ENCODE measurements at regions of chr12 and their contacts with region 1.

Region 1: GRCh38 chr12:53757095-53757770 is 5.5 kb upstream of the CISTR start:
- DNase-seq: peak; percentile 55
- ATAC-seq: peak; percentile 89
- H3K4me3 ChIP-seq: no peak overlapping the region
- H3K27ac ChIP-seq: no peak overlapping the region
- H3K4me1 ChIP-seq: peaks cover 2% of the 10 kb centered on the region
- H3K27me3 ChIP-seq: peaks cover 68% of the 10 kb centered on the region
- CTCF ChIP-seq: peak; percentile 64
- POLR2A ChIP-seq: no peak
- RAD21 ChIP-seq: peak; percentile 47

Region 2: DNA sequence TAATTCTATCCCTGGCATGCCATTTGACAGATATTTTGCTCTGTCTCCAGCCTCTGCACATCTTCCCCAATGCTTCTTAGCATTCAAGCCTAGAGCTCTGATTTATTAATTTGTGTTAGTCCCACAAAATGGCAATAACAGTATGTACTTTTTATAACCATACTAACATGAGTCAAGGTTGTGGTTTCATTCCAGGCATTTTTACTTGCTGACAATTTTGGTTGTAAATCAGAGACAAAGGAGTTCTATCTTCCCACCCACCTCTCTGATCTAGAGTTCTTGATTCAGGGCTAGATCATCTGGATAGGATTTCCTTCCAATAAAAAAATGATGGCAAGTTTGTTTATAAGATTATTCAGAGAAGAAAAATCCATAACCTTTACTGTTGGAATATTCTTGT is 13.0 kb after region 1 on chr12:
- CTCF ChIA-PET with region 1: interaction called, 14 read pairs
- POLR2A ChIA-PET with region 1: no interaction called
- dilution Hi-C with region 1: no loop called
- in situ Hi-C with region 1: no loop called
- intact Hi-C with region 1: no loop called
- DNase-seq: peak; percentile 97
- ATAC-seq: peak; percentile 84
- H3K4me3 ChIP-seq: no peak overlapping the region
- H3K27ac ChIP-seq: no peak overlapping the region
- H3K4me1 ChIP-seq: peaks cover 13% of the 10 kb centered on the region
- H3K27me3 ChIP-seq: no peaks in the 10 kb centered on the region
- CTCF ChIP-seq: no peak
- POLR2A ChIP-seq: no peak
- RAD21 ChIP-seq: no peak

Region 3: DNA sequence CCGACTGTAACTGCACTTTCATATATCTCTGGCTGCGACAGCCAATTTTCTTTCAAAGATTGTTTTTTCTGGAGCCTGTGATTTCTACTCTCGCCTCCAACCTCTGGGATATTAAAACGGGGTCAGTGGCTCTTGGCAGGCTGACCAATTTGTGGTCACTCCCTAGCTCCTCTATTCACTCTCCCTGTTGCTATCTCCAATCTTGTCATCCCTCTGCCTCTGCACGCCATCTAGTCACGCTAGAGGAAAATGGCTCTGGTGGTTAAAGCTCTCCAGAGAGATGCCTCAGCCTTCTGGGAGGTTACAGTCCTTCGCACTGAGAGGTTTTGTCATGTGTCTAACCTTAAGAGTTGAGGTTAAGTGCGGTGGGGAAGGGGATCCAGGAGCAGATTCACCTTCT is 54.4 kb after region 1 on chr12:
- CTCF ChIA-PET with region 1: no interaction called
- POLR2A ChIA-PET with region 1: no interaction called
- dilution Hi-C with region 1: no loop called
- in situ Hi-C with region 1: no loop called
- intact Hi-C with region 1: no loop called
- DNase-seq: no peak
- ATAC-seq: no peak
- H3K4me3 ChIP-seq: no peak overlapping the region
- H3K27ac ChIP-seq: no peak overlapping the region
- H3K4me1 ChIP-seq: no peaks in the 10 kb centered on the region; the same call in 1 of the 2 replicates
- H3K27me3 ChIP-seq: peaks cover 60% of the 10 kb centered on the region
- CTCF ChIP-seq: no peak
- POLR2A ChIP-seq: no peak
- RAD21 ChIP-seq: no peak

Region 4: DNA sequence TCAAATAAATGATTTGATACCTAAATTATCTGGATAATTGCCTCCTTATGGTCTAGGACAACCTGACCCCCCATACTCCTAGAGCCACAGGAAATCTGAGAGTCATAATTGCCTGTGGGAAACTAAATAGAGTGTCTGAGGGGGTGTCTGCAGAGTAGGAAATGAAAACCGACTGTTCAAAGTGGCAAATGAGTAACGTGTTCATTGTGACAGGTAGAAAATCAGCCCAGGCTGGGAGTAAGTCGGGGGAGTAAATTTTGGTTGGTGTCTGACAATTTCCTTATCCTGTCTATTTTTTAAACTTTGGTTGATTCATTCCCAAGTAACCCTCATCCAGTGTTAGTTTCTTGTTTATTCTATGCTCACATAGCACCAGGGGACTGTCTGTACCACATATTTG is 129.8 kb after region 1 on chr12:
- CTCF ChIA-PET with region 1: no interaction called
- POLR2A ChIA-PET with region 1: no interaction called
- dilution Hi-C with region 1: no loop called
- in situ Hi-C with region 1: no loop called
- intact Hi-C with region 1: no loop called
- DNase-seq: no peak
- ATAC-seq: no peak
- H3K4me3 ChIP-seq: no peak overlapping the region
- H3K27ac ChIP-seq: no peak overlapping the region
- H3K4me1 ChIP-seq: no peaks in the 10 kb centered on the region
- H3K27me3 ChIP-seq: peaks cover 14% of the 10 kb centered on the region
- CTCF ChIP-seq: no peak
- POLR2A ChIP-seq: no peak
- RAD21 ChIP-seq: no peak

Region 5: DNA sequence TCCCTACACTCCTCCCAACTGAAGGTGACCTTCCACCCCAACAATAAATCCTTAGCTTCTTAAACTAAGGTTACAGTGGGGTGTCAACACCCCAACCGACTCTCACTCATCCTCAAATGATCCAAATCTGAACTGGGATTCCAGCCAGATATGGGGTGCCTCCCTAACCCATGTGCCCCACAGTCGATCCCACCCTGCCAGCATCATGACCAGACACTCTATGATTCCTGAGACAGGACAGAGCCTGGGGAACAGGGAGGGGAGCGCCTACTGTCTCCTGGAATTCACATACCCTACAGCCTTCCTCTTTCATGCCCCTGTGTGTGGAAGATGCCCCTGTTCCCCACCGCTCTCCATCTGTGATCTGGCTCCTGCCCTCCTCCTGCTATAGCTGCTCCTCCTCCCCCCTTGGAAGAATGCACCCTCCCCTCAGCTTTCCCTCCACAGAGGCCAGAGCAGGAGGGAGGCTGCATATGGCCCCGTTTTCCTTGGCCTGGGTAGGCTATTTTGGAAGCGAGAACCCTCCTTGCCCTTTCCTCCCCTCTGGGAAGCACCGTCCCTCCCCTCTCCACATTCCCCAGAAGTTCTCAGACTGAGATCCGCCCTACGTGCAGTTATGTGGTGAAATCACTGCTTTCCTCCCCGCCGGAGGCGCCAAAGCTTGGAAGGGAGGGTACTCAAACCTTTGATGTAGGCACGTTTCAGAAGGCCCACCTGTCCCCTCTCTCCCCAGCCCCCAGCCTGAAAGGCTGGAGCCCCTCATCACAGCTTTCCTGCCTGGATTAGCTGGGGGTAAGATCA is 383.6 kb after region 1 on chr12:
- CTCF ChIA-PET with region 1: no interaction called
- POLR2A ChIA-PET with region 1: no interaction called
- dilution Hi-C with region 1: no loop called
- in situ Hi-C with region 1: no loop called
- intact Hi-C with region 1: no loop called
- DNase-seq: no peak
- ATAC-seq: no peak
- H3K4me3 ChIP-seq: no peak overlapping the region
- H3K27ac ChIP-seq: no peak overlapping the region
- H3K4me1 ChIP-seq: no peaks in the 10 kb centered on the region
- H3K27me3 ChIP-seq: peaks cover 57% of the 10 kb centered on the region
- CTCF ChIP-seq: no peak
- POLR2A ChIP-seq: no peak
- RAD21 ChIP-seq: no peak